ENCODE measurements at regions of chr7 and their contacts with region 1.

Region 1: DNA sequence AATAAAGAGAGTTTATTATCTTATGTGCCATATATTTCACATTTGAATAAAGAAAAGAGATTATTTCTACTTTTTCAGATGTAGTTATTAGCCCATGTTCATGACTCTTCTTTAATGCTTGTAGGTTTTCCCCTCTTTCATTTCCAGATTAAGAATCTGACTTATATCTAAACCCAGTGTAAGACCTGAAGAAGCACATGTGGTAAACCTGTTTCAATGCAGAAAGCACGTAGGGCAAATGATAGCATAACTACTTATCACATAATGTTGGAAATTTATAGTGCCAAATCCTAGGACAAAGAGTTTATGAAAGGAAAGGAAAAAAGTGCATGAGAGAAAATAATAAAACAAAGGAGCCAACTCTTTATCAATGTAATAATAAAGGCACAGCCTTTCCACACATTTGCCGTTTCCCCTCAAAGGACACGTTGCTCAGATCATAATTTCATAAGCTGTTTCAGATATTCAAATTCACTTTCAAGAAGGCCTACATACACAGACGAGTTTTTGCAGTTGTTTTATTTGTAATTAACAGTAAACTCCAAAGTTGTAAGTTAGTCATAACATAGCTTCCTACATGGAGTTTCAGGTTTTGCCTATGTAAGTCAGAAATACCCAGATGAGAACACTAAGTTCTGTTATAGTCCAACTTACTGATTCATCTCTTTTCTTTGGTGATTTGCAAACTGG is 88.8 kb upstream of the MDFIC start:
- DNase-seq: peak; percentile 12
- H3K4me3 Mint-ChIP-seq: no peak overlapping the region
- H3K27ac Mint-ChIP-seq: peak overlapping the region; percentile 93
- H3K4me1 Mint-ChIP-seq: peaks cover 37% of the 10 kb centered on the region
- H3K27me3 Mint-ChIP-seq: peaks cover 14% of the 10 kb centered on the region

Region 2: DNA sequence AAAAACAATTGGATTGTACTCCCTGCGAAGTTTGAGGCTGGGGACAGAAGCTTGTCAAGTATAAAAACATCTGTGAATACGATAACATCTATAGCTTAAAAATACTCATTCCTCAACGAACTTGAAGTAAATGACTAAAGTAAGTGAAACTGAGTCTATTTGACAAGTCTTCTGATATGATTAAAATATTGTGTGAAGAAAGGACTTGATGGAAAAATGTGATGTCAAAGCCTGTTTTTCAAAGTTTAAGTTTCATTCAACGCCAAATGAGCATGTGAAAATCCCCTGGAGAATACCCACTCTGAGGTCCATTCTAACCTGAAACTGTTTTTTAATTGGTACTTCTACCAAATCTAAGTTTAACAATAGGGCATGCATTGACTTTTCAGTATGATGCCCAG is 33.4 kb before region 1 on chr7:
- CTCF ChIA-PET with region 1: interaction called, 6 read pairs
- intact Hi-C with region 1: loop called (anchors 1 kb)
- DNase-seq: peak; percentile 39
- H3K4me3 Mint-ChIP-seq: no peak overlapping the region
- H3K27ac Mint-ChIP-seq: peak overlapping the region; percentile 81
- H3K4me1 Mint-ChIP-seq: peaks cover 70% of the 10 kb centered on the region
- H3K27me3 Mint-ChIP-seq: peaks cover 13% of the 10 kb centered on the region

Region 3: GRCh38 chr7:114889646-114890285 is 56.7 kb after region 1 on chr7:
- CTCF ChIA-PET with region 1: no interaction called
- intact Hi-C with region 1: loop called (anchors 1 kb)
- DNase-seq: peak; percentile 35
- H3K4me3 Mint-ChIP-seq: no peak overlapping the region
- H3K27ac Mint-ChIP-seq: peak overlapping the region; percentile 87
- H3K4me1 Mint-ChIP-seq: peaks cover 43% of the 10 kb centered on the region
- H3K27me3 Mint-ChIP-seq: no peaks in the 10 kb centered on the region

Region 4: DNA sequence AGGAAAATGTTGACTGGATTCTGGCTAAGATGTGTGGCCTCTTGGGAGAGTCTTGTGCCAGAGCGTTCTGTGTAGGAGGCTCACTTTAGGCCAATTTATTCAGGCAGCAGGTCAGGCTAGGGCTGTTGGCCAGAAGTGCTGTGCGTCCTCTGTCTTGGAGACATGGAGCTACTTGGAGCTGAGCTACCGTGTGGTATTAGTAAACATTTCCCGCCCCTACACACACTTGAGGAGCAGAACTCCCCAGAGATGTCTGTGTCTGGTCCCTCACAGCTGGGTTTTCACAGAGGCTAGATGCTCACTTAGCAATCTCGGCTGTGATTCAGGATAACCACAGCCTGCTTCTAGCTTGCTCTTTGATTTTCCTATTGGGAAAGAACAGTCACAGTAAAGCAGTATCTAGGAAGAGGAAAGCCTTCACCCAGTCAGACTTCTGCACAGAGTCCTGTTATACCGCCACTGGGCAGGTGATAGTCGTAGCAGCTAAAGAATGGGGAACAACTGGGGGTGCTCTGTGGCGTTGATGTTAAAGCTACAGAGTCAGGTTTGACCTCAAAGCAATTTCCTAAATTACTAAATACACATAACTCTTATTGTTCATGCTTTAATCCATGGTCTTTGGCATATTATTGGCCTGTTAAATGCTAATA is 175.5 kb after region 1 on chr7:
- CTCF ChIA-PET with region 1: no interaction called
- intact Hi-C with region 1: loop called (anchors 1 kb)
- DNase-seq: peak; percentile 18
- H3K4me3 Mint-ChIP-seq: peak overlapping the region; percentile 20
- H3K27ac Mint-ChIP-seq: peak overlapping the region; percentile 74
- H3K4me1 Mint-ChIP-seq: peaks cover 74% of the 10 kb centered on the region
- H3K27me3 Mint-ChIP-seq: no peaks in the 10 kb centered on the region

Region 5: GRCh38 chr7:116087291-116087690 is 1254.2 kb after region 1 on chr7:
- CTCF ChIA-PET with region 1: no interaction called
- intact Hi-C with region 1: no loop called
- DNase-seq: no peak
- H3K4me3 Mint-ChIP-seq: no peak overlapping the region
- H3K27ac Mint-ChIP-seq: no peak overlapping the region
- H3K4me1 Mint-ChIP-seq: no peaks in the 10 kb centered on the region
- H3K27me3 Mint-ChIP-seq: no peaks in the 10 kb centered on the region